PC-3 (cell line): ENCODE measurements at regions of chr7 and their contacts with region 1.

Region 1: DNA sequence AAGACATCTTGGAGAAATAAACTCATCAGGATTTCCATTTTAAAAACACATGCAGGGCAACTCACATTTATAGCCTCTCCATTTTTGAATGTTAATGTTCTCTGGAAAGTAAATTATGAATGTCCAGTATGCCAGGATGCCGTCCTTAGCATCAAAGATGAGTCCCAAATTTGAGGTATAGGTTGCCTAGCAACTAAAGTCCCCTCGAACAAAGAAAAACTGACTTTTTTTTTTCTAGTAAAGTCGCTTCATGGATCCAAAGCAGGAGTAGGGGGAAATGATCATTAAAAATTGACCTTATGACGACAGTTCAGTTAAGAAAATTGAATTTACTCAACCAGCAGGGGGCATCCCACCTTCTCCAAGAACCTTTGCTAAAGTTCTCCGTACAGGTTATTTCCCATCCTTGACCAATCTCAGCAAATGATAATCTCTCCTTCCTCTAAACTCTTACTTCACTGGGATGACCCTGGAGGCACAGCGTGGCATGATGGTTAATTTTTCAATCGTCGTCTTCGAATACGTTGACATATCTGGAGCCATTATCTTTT is 228.4 kb downstream of the CALN1 start:
- DNase-seq: peak; percentile 27
- ATAC-seq: no peak
- H3K4me3 ChIP-seq: no peak overlapping the region
- H3K27ac ChIP-seq: no peak overlapping the region
- H3K4me1 ChIP-seq: no peaks in the 10 kb centered on the region
- H3K27me3 ChIP-seq: no peaks in the 10 kb centered on the region
- CTCF ChIP-seq: peak; percentile 54

Region 2: GRCh38 chr7:72017756-72018155 is 166.0 kb before region 1 on chr7:
- CTCF ChIA-PET with region 1: no interaction called
- POLR2A ChIA-PET with region 1: no interaction called
- intact Hi-C with region 1: no loop called
- DNase-seq: no peak
- ATAC-seq: no peak
- H3K4me3 ChIP-seq: no peak overlapping the region
- H3K27ac ChIP-seq: no peak overlapping the region
- H3K4me1 ChIP-seq: no peaks in the 10 kb centered on the region
- H3K27me3 ChIP-seq: no peaks in the 10 kb centered on the region
- CTCF ChIP-seq: no peak

Region 3: GRCh38 chr7:72244814-72245398 is 61.1 kb after region 1 on chr7:
- CTCF ChIA-PET with region 1: no interaction called
- POLR2A ChIA-PET with region 1: no interaction called
- intact Hi-C with region 1: loop called (anchors 2 kb)
- DNase-seq: no peak
- ATAC-seq: no peak
- H3K4me3 ChIP-seq: no peak overlapping the region
- H3K27ac ChIP-seq: no peak overlapping the region
- H3K4me1 ChIP-seq: no peaks in the 10 kb centered on the region
- H3K27me3 ChIP-seq: no peaks in the 10 kb centered on the region
- CTCF ChIP-seq: no peak